Heart right ventricle (tissue), 16 donors: ENCODE measurements at regions of chr19 and their contacts with region 1.

Region 1: DNA sequence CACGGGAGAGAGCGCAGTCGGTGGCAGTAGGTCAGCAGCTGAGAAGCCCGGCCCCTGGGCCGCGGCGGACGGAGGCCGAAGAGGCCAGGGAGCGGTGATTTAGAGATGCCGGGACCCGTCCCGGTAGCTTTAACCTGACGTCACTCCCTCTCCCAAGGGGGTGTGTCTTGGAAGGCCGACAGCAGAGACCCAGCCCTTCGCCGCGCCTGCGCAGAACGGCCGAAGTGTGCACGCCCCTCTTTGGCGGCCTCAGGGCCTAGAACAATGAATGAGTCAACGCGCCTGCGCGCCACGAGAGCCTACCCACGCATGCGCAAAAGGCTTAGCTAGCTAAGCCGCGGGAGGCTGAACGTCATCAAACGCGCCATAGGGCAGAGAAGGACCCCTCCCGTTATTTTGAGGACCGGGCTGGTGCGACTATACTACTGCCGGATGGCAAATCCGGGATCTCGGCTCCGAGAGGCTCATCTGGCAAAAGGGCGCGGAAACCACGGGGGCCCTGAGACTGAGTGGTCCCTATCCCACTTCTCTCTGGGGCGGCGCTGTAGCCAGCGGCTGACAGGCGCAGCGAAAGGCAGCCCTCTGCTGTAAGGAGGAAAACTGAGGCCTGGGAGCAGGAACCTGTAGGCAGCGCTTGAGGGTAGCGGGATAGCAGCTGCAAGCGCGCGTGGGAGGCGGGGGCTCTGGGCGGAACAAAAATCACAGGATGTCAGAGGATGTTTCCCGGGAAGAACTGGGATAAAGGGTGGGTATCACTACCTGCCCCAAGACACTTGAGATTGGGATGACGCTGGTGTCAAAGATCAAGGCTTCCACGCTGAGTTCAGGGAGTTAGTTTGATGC is at the starts of genes IRGQ and ZNF576:
- DNase-seq: peak; percentile 100
- ATAC-seq: peak; percentile 93 to 97 (median 94)
- H3K4me3 ChIP-seq: peak within 1 kb of the TSS; percentile 55 to 78 (median 72)
- H3K27ac ChIP-seq: peak within 1 kb of the TSS; percentile 94 to 99 (median 97)
- H3K4me1 ChIP-seq: peaks cover 16 to 46% (median 38%) of the 10 kb centered on the region in 9 donors
- H3K27me3 ChIP-seq: no peaks in the 10 kb centered on the region
- CTCF ChIP-seq: peak in 2 of 9 donors; percentile 5 to 16
- total RNA-seq, gene IRGQ: 19.0 to 34.2 (median 28.4) TPM
- total RNA-seq, gene ZNF576: 8.7 to 15.9 (median 12.7) TPM

Region 2: DNA sequence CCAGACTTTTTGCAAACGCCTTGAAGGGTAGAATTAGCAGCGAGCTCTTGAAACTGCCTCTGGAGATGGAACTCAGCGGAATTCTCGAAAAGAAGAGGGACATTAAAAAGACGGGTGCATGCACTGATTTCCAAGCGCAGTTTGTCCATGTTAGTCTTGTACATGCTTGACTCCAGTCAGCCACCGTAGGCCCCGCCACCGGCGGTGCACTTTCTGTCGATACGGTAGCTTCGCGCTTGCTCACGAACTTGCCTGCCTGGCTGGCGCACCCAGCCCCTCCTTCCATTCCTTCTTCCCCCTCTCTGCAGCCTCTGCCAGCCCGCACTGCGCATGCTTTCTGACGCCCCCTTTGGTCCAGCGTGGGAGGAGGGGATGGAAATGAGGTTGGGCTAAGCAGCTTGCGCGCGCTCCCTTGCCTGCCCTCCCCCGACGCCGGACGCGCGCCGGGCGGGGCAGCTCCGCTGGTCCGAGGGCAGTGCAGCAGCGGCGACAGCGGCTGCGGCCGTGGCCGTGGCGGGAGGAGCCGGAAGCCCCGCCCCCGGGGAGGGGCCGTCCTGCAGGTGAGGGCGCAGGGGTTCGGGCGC is 63.2 kb before region 1 on chr19 and contains the start of gene ZNF575:
- intact Hi-C with region 1: loop called in 6 of 10 experiments (anchors 5 to 10 kb)
- DNase-seq: peak; percentile 89 to 94
- ATAC-seq: peak; percentile 72 to 88 (median 80)
- H3K4me3 ChIP-seq: peak within 1 kb of the TSS; percentile 48 to 74 (median 61)
- H3K27ac ChIP-seq: peak within 1 kb of the TSS; percentile 66 to 96 (median 89)
- H3K4me1 ChIP-seq: peaks cover 0 to 35% (median 12%) of the 10 kb centered on the region in 9 donors
- H3K27me3 ChIP-seq: no peaks in the 10 kb centered on the region
- CTCF ChIP-seq: peak in 2 of 9 donors; percentile 7 to 13
- total RNA-seq, gene ZNF575: 0.45 to 2.0 (median 1.3) TPM

Region 3: GRCh38 chr19:43575156-43575950 is 20.9 kb before region 1 on chr19 and contains the starts of genes PINLYP and XRCC1:
- intact Hi-C with region 1: loop called in 5 of 10 experiments (anchors 1 to 2 kb)
- DNase-seq: peak; percentile 97 to 99
- ATAC-seq: peak; percentile 99 to 100 (median 100)
- H3K4me3 ChIP-seq: peak within 1 kb of the TSS; percentile 56 to 93 (median 71)
- H3K27ac ChIP-seq: peak within 1 kb of the TSS in 9 of 10 donors; percentile 61 to 91 (median 78)
- H3K4me1 ChIP-seq: peaks cover 5 to 29% (median 13%) of the 10 kb centered on the region in 9 donors
- H3K27me3 ChIP-seq: no peaks in the 10 kb centered on the region
- CTCF ChIP-seq: no peak
- total RNA-seq, gene PINLYP: 0.28 to 3.7 (median 1.3) TPM
- total RNA-seq, gene XRCC1: 11.8 to 21.9 (median 17.7) TPM

Region 4: GRCh38 chr19:43619262-43620060 is 23.2 kb after region 1 on chr19 and contains the start of gene ZNF428:
- intact Hi-C with region 1: loop called in 2 of 10 experiments (anchors 2 kb)
- DNase-seq: peak; percentile 85 to 86
- ATAC-seq: peak; percentile 94 to 97 (median 95)
- H3K4me3 ChIP-seq: peak within 1 kb of the TSS; percentile 59 to 90 (median 80)
- H3K27ac ChIP-seq: peak within 1 kb of the TSS; percentile 84 to 97 (median 94)
- H3K4me1 ChIP-seq: peaks cover 0 to 24% (median 7%) of the 10 kb centered on the region in 9 donors
- H3K27me3 ChIP-seq: no peaks in the 10 kb centered on the region
- CTCF ChIP-seq: no peak
- total RNA-seq, gene ZNF428: 28.1 to 37.6 (median 32.9) TPM